Common myeloid progenitor, CD34-positive (primary cell): ENCODE measurements at regions of chr1 and their contacts with region 1.

Region 1: DNA sequence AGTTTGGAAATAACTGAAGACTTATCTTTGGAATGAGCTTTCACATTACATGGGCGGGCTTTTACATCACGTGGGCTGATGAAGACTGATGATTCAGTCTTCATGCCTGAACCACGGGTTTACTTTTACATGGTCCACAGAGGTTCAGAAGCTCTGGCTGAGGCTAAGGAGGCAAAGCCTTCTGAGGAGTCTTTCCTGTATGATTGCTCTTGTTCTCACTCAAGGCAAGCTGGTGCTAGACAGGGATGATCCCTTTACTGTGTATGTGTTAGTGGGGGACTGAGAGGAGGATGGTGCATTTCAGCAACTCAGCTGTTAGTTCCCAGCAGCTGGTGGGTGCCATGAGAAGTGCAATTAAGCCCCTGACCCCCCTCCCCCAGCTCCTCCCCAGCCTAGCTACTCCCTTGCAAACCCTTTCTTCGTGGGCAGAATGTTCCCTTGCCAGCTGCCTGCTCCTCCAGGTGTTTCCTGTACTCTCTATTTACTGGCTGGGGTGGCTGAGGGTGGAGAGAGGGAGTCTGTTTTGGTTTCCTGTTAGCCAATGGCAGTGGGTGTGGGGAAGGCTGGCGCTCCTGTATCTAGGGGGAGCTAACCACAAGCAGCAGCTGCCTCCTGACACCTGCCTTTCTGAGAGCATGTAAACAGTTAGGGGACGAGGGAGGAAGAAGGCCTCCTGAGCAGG is 15.4 kb downstream of the BTG2 start:
- DNase-seq: peak; percentile 95 to 100 (median 99)
- H3K4me3 ChIP-seq: peak overlapping the region in 3 of 7 experiments; percentile 13 to 52 (median 44)
- H3K27ac ChIP-seq: peak overlapping the region; percentile 59 to 85
- H3K4me1 ChIP-seq: peaks cover 33 to 84% (median 73%) of the 10 kb centered on the region in 4 experiments
- H3K27me3 ChIP-seq: no peaks in the 10 kb centered on the region

Region 2: DNA sequence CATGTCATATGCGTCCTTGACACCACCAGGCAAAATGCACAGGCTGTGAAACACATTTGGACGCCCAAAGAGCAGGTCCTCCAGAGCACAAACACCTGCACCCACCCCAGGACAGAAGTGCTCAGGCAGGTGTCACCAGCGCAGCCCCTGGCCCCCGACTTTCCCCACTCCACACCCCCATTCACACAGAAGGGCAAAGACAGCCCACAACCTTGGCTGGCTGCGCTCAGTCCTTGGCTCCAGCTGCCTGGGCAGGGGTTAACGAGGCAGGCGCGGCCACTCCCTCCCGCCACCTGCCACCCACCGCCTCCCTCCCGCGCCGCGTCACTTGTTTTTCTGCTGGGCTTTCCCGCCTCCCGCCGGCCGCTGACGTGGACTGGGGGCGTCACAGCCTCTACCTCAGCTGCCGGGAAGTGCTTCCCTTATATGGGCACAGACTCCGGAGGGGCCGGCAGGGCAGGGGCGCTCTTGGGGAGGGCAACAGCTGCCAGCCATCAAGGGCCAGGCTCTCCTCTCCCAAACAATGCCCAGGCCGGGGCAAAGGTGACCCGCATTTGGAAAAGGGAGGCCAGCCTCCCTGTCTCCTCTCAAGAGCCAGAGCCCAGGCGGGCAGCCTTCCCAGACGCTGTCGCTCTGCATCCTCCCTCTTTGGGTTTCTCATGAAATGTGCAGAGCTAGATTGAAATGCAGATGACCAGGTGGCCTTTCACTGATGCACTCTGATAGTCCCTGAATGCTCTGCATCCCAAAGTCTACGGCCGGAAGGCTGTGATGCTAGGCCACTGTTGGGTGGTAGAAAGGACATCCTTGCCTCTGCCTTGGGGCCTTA is 30.3 kb before region 1 on chr1:
- CTCF ChIA-PET with region 1: interaction called, 36 read pairs
- POLR2A ChIA-PET with region 1: interaction called, 10 read pairs
- DNase-seq: peak; percentile 85 to 95 (median 95)
- H3K4me3 ChIP-seq: peak overlapping the region in 3 of 7 experiments; percentile 54 to 58 (median 55)
- H3K27ac ChIP-seq: peak overlapping the region; percentile 81 to 85
- H3K4me1 ChIP-seq: peaks cover 25 to 64% (median 58%) of the 10 kb centered on the region in 4 experiments
- H3K27me3 ChIP-seq: no peaks in the 10 kb centered on the region

Region 3: GRCh38 chr1:203368624-203369451 is 48.1 kb after region 1 on chr1:
- CTCF ChIA-PET with region 1: no interaction called
- POLR2A ChIA-PET with region 1: no interaction called
- DNase-seq: no peak
- H3K4me3 ChIP-seq: no peak overlapping the region
- H3K27ac ChIP-seq: no peak overlapping the region
- H3K4me1 ChIP-seq: no peaks in the 10 kb centered on the region
- H3K27me3 ChIP-seq: peaks cover 0 to 14% (median 7%) of the 10 kb centered on the region in 5 experiments